B cell (primary cell): ENCODE measurements at regions of chr1 and their contacts with region 1.

Region 1: GRCh38 chr1:201481761-201482493 is 12.9 kb upstream of the PHLDA3 start:
- DNase-seq: peak; percentile 85
- ATAC-seq: peak; percentile 81
- H3K4me3 ChIP-seq: peak overlapping the region in 4 of 5 experiments; percentile 14 to 67 (median 52)
- H3K4me3 Mint-ChIP-seq: peak overlapping the region; percentile 87
- H3K27ac ChIP-seq: no peak overlapping the region
- H3K27ac Mint-ChIP-seq: peak overlapping the region; percentile 70
- H3K4me1 ChIP-seq: peaks cover 14 to 25% of the 10 kb centered on the region in 2 donors
- H3K4me1 Mint-ChIP-seq: peaks cover 26% of the 10 kb centered on the region
- H3K27me3 ChIP-seq: peaks cover 0 to 13% (median 0%) of the 10 kb centered on the region in 4 experiments
- H3K27me3 Mint-ChIP-seq: no peaks in the 10 kb centered on the region
- CTCF ChIP-seq: peak; percentile 93

Region 2: DNA sequence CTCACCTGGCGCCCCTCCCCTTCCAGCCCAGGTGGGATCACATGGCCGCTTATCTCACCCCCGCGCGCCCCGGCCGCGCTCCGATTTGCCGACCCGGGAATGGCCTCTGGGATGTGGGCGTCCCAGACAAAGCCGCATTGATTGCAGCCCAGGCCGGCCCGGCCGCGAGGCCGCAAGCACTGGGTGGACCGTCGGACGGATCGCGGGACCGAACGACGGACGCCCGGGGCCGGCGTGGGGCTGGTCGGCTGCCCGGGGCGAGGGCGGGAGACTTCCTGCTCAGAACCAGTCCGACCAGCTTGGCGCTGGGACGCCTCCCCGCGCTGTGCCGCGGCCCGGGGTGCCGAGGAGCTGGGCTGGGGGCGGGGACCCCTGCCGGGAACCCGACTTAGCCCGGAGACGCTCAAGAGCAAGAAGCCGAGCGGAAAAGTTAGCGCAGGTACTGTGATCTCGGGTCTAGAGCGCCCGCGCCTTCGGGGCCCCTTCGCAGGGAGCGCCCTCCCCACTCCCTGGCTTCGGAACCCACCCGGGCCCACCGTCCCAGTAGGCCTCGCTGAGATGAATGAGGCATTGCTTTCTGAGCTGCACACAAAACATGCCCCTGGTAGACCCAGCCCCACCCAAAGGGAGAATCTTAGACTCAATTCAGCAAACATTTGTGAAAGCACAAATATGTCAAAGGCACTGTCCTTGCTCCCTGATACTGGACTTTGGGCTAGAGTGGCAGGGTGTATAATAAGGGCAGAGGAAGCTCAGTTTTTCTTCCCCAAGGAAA is 82.4 kb before region 1 on chr1:
- CTCF ChIA-PET with region 1: no interaction called
- POLR2A ChIA-PET with region 1: no interaction called
- intact Hi-C with region 1: no loop called
- DNase-seq: no peak
- ATAC-seq: no peak
- H3K4me3 ChIP-seq: no peak overlapping the region
- H3K4me3 Mint-ChIP-seq: no peak overlapping the region
- H3K27ac ChIP-seq: no peak overlapping the region
- H3K27ac Mint-ChIP-seq: no peak overlapping the region
- H3K4me1 ChIP-seq: peaks cover 0 to 4% of the 10 kb centered on the region in 2 donors
- H3K4me1 Mint-ChIP-seq: no peaks in the 10 kb centered on the region
- H3K27me3 ChIP-seq: peaks cover 0 to 37% (median 13%) of the 10 kb centered on the region in 4 experiments
- H3K27me3 Mint-ChIP-seq: peaks cover 30% of the 10 kb centered on the region
- CTCF ChIP-seq: no peak

Region 3: GRCh38 chr1:201436393-201436792 is 45.5 kb before region 1 on chr1:
- CTCF ChIA-PET with region 1: interaction called, 16 read pairs
- POLR2A ChIA-PET with region 1: no interaction called
- intact Hi-C with region 1: loop called (anchors 2 kb)
- DNase-seq: no peak
- ATAC-seq: no peak
- H3K4me3 ChIP-seq: no peak overlapping the region
- H3K4me3 Mint-ChIP-seq: no peak overlapping the region
- H3K27ac ChIP-seq: no peak overlapping the region
- H3K27ac Mint-ChIP-seq: no peak overlapping the region
- H3K4me1 ChIP-seq: peaks cover 3 to 7% of the 10 kb centered on the region in 2 donors
- H3K4me1 Mint-ChIP-seq: peaks cover 7% of the 10 kb centered on the region
- H3K27me3 ChIP-seq: peaks cover 0 to 13% (median 4%) of the 10 kb centered on the region in 4 experiments
- H3K27me3 Mint-ChIP-seq: peaks cover 26% of the 10 kb centered on the region
- CTCF ChIP-seq: no peak

Region 4: DNA sequence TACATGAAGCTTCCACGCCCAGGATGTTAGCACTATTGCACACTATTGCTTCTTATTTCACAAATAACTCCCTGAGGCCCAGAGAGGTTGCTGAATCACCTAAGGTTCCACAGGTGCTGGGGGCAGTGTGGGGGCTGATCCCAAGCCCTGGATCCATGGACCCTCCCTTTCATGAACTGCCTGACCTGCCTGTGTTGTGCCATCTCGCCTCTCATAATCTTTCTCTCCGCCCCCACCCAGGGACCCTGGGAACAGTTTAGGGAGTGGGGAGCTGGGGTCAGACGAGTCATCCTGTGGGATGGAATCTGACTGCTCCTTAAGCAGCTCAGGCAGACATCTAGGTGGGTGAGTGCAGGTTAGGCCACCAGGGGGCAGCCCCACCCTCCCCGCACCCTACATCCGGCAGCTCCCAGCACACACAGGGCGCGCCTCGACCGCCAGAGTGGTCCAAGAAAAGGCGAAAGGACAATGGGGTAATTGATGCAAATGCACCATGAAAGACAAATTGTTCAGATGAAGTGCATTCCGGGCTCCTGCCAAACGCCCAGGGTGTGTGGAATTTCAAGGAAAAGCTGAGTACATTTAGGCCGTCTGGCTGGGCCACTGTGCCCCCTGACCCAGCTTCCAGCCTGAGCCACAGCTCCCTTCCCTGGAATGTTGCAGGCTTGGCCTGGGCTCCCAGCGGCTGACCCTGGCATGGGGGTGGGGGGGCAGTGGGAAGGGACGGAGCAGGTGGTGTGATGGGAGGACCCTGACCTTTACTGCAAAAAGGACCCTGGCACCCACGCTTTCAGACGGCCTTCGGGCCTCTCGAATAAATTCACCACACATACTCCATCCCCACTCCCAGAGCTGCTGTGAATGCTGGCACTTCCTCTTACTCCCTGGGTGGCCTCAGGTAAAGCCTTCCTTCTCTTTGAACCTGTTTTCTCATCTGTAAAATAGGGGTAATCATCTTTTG is 33.7 kb before region 1 on chr1:
- CTCF ChIA-PET with region 1: interaction called, 52 read pairs
- POLR2A ChIA-PET with region 1: no interaction called
- intact Hi-C with region 1: loop called (anchors 5 kb)
- DNase-seq: peak; percentile 68
- ATAC-seq: peak; percentile 70
- H3K4me3 ChIP-seq: no peak overlapping the region
- H3K4me3 Mint-ChIP-seq: no peak overlapping the region
- H3K27ac ChIP-seq: no peak overlapping the region
- H3K27ac Mint-ChIP-seq: no peak overlapping the region
- H3K4me1 ChIP-seq: peaks cover 9 to 17% of the 10 kb centered on the region in 2 donors
- H3K4me1 Mint-ChIP-seq: peaks cover 4% of the 10 kb centered on the region
- H3K27me3 ChIP-seq: peaks cover 0 to 9% (median 1%) of the 10 kb centered on the region in 4 experiments
- H3K27me3 Mint-ChIP-seq: peaks cover 22% of the 10 kb centered on the region
- CTCF ChIP-seq: peak; percentile 75

Region 5: GRCh38 chr1:201500670-201501120 is 18.8 kb after region 1 on chr1:
- CTCF ChIA-PET with region 1: interaction called, 33 read pairs
- POLR2A ChIA-PET with region 1: no interaction called
- intact Hi-C with region 1: no loop called
- DNase-seq: no peak
- ATAC-seq: no peak
- H3K4me3 ChIP-seq: no peak overlapping the region
- H3K4me3 Mint-ChIP-seq: no peak overlapping the region
- H3K27ac ChIP-seq: no peak overlapping the region
- H3K27ac Mint-ChIP-seq: no peak overlapping the region
- H3K4me1 ChIP-seq: peaks cover 5 to 7% of the 10 kb centered on the region in 2 donors
- H3K4me1 Mint-ChIP-seq: peaks cover 10% of the 10 kb centered on the region
- H3K27me3 ChIP-seq: no peaks in the 10 kb centered on the region
- H3K27me3 Mint-ChIP-seq: no peaks in the 10 kb centered on the region
- CTCF ChIP-seq: no peak

Region 6: DNA sequence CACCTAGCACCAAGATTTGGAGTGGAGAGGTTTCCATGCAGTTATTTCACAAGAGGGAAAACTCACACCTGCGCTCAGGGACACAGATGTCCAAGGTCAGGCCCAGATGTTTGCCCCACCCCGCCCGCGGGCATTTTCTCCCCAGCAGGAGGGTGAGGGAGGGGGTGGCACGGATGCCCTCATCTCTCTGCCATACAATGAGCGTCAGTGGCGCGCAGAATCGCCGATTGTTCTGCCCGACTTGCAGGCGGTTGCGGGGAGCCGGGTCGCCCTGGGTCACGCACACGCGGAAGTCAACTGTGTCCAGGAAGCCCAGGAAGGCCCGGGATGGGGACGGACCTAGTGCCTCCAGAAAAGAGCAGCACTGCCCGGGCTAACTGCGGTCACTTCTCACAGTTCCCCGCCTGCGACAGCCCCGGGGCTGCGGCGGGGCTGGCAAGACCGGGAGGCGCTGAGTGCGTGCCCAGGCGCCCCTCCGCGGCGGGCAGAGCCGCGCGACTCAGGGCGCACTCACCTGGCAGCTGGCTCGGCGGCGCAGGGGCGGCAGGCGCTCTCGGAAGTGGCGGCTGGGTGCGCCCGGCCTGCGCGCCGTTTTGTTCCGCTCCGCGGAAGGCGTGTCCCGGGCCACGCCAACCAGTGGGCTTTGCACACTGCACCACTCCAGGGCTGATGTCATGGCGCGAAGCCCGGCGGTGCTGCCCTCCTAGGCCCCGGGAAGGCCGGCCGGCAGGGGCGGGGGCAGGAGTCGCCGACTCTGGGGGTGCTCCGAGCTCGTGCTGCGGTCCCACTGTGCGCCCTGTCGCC is 24.8 kb after region 1 on chr1 and contains the start of gene CSRP1:
- CTCF ChIA-PET with region 1: interaction called, 407 read pairs
- POLR2A ChIA-PET with region 1: interaction called, 4 read pairs
- intact Hi-C with region 1: loop called (anchors 1 kb)
- DNase-seq: peak; percentile 85
- ATAC-seq: peak; percentile 96
- H3K4me3 ChIP-seq: peak within 1 kb of the TSS; percentile 26 to 87 (median 67)
- H3K4me3 Mint-ChIP-seq: peak within 1 kb of the TSS; percentile 94
- H3K27ac ChIP-seq: peak within 1 kb of the TSS; percentile 12 to 67
- H3K27ac Mint-ChIP-seq: peak within 1 kb of the TSS; percentile 86
- H3K4me1 ChIP-seq: peaks cover 20 to 28% of the 10 kb centered on the region in 2 donors
- H3K4me1 Mint-ChIP-seq: peaks cover 35% of the 10 kb centered on the region
- H3K27me3 ChIP-seq: no peaks in the 10 kb centered on the region
- H3K27me3 Mint-ChIP-seq: no peaks in the 10 kb centered on the region
- CTCF ChIP-seq: peak; percentile 3
- total RNA-seq, gene CSRP1: 23.8 and 34.7 TPM in 2 replicates